ENCODE measurements at regions of chr6 and their contacts with region 1.

Region 1: DNA sequence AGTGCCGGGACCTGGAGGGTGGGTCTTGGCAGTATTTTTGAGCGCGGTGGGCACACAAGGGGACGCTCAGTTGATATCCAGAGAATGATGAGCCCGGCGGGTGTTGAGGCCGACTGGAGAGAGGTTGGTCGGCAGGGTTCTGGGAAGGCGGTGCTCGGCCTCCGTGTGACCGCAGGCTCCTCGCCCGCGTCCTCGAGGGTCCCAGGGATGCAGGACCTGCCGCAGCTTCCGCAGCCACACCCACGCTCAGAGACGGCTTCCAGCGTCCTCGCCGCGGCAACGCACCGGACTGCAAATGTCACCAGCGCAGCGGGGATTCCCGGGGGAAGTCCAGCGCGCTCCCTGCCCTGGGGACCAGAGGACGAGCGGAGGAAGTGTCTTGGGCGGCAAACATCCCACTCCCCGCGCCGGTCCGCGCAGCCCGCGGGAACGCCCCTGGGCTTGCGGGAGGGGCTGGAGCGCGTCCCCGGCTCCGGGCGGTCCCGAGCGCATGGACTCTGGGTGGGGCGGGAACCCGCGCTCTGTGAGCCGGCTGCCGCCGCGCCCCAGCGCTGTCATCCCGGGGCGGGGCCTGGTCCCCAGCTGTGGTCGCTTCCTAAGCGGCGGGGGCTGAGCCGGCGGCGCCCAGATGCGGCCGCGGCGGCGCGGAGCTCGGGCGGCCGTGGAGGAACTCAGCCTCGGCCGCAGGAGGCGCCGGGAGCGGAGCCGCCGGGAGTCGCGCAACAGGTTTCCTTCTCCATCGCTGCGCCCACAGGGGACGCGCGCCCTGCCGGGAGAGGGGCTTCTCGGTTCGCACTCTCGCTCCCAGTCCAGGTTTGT is at the start of gene STX11:
- DNase-seq: peak; percentile 85
- H3K4me3 Mint-ChIP-seq: peak within 1 kb of the TSS; percentile 89
- H3K27ac Mint-ChIP-seq: peak within 1 kb of the TSS; percentile 99
- H3K4me1 Mint-ChIP-seq: peaks cover 45% of the 10 kb centered on the region
- H3K27me3 Mint-ChIP-seq: peaks cover 7% of the 10 kb centered on the region
- total RNA-seq, gene STX11: 23.8 to 25.0 TPM

Region 2: DNA sequence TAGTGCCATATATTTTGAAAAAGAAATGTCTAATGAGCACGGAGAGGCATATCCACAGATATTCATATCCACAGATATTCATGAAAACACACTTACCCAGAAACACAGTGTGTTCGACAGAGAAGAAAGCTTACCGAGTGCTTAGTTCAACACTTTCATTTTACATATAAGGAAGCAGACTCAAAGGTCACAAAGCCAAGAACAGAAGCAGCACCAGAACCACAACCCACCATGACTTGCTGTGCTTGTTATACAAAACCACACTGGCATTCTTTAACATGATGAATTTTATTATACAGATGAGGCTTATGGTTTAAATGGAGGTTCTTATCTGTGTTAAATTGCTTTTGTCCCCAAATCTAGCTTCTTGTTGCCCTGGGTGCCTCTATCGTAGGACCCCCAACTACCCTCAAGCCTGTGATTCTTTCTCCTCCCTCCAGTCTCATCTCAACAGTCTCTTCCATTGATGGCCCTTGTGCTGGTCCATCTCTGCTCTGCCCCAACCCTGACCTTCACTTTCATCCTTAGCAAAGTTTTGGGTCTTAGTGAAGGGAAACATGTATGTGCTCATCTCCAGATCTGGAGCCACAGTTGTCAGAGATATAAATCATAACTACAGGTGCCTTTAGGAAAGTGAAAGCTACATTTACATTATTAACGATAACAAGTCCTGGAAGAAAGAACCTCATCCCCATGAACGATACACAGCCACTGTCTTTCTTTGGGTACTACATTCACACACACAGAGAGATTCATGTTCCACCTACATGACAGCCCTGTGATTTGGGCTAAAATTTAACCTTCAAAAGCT is 94.8 kb before region 1 on chr6:
- CTCF ChIA-PET with region 1: interaction called, 3 read pairs
- POLR2A ChIA-PET with region 1: interaction called, 13 read pairs
- DNase-seq: peak; percentile 64
- H3K4me3 Mint-ChIP-seq: peak overlapping the region; percentile 69
- H3K27ac Mint-ChIP-seq: peak overlapping the region; percentile 82
- H3K4me1 Mint-ChIP-seq: peaks cover 32% of the 10 kb centered on the region
- H3K27me3 Mint-ChIP-seq: no peaks in the 10 kb centered on the region

Region 3: DNA sequence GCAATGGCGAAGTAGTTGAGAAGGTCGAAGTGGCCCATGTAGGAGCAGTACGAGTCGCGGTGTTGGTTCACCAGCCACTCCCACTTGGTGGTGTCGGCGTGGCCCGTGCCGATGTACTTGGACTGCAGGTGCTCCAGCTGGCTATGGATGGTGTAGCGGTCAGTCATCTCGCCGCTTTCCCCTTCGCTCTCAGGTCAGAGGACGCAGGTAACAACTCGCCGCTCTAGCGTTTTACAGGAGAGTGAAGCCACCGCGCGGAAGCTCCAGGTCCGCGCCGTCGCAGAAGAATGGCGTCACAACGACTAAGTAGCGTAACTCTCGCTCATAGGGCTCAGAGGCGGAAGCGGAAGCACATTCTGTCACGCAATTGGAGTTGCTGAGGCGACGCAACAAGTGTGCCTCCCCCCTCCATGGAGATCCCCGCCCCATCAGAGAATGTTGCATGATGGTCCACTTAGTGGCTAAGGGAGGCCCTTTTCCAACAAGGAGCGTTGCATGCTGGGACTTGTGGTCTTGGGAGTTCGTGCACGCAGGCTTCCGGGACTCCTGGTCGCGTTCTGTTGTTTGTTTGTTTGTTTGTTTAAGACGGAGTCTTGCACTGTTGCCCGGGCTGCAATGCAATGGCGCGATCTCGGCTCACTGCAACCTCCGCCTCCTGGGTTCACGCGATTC is 54.6 kb before region 1 on chr6 and contains the start of gene SF3B5:
- CTCF ChIA-PET with region 1: interaction called, 5 read pairs
- POLR2A ChIA-PET with region 1: interaction called, 23 read pairs
- DNase-seq: peak; percentile 99
- H3K4me3 Mint-ChIP-seq: peak within 1 kb of the TSS; percentile 88
- H3K27ac Mint-ChIP-seq: peak within 1 kb of the TSS; percentile 94
- H3K4me1 Mint-ChIP-seq: peaks cover 24% of the 10 kb centered on the region
- H3K27me3 Mint-ChIP-seq: no peaks in the 10 kb centered on the region
- total RNA-seq, gene SF3B5: 128 to 130 TPM

Region 4: GRCh38 chr6:144162977-144163376 is 12.9 kb after region 1 on chr6:
- CTCF ChIA-PET with region 1: interaction called, 3 read pairs
- POLR2A ChIA-PET with region 1: interaction called, 14 read pairs
- DNase-seq: no peak
- H3K4me3 Mint-ChIP-seq: no peak overlapping the region
- H3K27ac Mint-ChIP-seq: no peak overlapping the region
- H3K4me1 Mint-ChIP-seq: peaks cover 5% of the 10 kb centered on the region
- H3K27me3 Mint-ChIP-seq: no peaks in the 10 kb centered on the region

Region 5: DNA sequence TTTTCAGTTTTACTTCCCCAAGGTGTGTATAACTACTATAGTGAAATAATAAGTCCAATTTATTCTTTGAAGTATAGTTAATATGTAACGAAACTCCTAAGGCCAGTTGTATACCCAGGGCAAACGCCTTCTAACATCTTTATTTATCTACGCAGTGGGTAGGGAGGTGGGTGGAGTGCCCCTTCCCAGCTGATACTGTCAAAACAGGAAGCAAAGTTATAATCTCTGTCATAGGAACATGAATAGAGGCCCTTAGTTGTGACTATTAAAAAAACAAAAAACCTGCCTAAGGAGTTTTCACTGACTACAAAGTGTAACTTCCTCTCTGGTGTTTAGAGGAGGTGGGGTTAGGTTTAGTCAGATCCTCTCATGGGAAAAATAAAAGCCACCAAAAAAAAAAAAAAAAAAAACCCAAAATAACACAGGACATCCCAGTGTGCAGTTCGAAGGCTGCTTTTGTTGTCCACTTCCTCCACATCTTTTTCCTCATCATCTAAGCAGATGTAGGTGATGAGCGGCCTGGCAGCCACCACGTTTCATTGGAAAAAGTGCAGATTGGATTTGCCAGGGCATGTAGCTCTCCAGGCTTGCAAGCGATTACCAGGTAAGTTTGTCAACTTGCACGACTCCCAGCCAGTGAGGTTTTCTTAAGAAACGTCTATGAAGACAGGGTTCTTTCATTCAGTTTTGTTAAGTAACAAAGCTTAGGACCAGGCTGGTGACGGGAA is 193.8 kb after region 1 on chr6:
- CTCF ChIA-PET with region 1: no interaction called
- POLR2A ChIA-PET with region 1: interaction called, 11 read pairs
- DNase-seq: peak; percentile 54
- H3K4me3 Mint-ChIP-seq: peak overlapping the region; percentile 99
- H3K27ac Mint-ChIP-seq: peak overlapping the region; percentile 99
- H3K4me1 Mint-ChIP-seq: peaks cover 73% of the 10 kb centered on the region
- H3K27me3 Mint-ChIP-seq: no peaks in the 10 kb centered on the region